ENCODE measurements at regions of chr1 and their contacts with region 1.

Region 1: DNA sequence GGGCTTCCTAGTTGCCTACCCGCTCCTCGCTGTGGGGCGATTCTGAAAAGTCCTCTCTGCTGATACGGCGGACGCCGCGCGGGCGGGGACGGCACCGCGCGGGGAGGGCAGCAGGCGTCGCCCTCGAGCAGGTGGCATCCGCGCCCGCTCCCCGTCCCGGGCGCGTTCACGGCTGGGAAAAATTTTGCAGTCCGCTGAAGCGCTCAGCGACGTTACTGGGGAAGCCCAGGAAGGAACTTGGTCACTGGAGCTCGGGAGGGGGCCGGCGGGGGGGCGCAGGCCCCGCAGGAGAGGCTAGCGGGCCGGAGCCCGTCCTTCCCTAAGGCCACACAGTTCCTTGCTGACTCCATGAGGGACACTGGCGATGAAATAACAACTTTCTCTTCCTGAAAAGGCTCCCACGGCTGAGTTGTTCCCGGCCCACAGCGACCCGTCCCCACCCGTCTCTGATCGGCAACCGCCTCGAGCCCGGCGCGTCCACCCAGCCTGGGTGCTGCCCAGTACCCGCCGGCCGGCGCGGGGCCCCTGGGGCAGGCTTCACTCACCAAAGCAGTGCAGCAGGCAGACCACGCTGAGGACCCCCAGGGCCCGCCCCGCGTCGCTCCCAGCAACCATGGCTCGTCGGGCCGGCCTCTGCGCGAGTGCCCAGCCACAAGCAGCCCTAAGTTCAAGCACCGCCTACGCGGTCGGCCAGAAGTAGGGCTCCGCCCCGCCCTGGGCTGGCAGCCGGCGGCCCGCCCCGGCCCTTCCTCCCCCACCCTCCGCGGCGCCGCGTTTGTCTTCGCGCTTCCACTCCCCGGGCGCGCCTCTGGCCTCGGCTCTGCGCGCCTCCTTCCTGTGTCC is at the start of gene CD58:
- DNase-seq: peak; percentile 92
- CTCF ChIP-seq: peak; percentile 87

Region 2: DNA sequence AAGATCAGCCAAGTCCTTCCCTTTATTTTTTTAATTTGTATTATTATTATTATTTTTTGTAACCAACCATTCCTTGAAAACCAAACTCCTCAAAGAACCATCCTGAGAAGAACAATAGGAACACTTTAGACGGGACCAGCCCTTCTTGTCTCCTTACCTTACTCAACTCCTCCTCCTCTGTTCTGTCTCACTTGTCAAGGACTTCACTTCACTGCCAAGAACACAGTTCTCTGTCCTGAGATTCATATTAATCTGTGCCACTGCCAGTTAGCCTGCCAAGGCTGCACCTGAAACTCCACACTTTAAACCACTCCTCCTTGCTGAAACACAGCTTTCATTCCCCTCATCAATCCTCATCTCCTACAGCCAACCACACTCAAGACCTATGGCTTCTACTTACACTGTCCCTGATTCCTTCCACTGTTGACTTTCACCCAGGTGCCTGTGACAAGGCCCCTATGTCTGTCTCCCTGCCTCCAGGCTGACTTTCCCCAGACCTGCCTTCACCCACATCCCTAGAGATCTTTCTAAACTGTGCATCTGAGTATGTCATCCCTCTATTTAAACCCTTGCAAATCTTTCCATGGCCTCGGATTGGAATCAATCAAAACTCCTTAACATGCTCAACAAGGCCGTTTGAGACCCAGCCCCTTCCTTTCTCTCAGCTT is 271.2 kb before region 1 on chr1:
- in situ Hi-C with region 1: no loop called
- DNase-seq: no peak
- CTCF ChIP-seq: no peak

Region 3: GRCh38 chr1:116679091-116679827 is 108.7 kb after region 1 on chr1:
- in situ Hi-C with region 1: loop called (anchors 10 kb)
- DNase-seq: no peak
- CTCF ChIP-seq: no peak

Region 4: DNA sequence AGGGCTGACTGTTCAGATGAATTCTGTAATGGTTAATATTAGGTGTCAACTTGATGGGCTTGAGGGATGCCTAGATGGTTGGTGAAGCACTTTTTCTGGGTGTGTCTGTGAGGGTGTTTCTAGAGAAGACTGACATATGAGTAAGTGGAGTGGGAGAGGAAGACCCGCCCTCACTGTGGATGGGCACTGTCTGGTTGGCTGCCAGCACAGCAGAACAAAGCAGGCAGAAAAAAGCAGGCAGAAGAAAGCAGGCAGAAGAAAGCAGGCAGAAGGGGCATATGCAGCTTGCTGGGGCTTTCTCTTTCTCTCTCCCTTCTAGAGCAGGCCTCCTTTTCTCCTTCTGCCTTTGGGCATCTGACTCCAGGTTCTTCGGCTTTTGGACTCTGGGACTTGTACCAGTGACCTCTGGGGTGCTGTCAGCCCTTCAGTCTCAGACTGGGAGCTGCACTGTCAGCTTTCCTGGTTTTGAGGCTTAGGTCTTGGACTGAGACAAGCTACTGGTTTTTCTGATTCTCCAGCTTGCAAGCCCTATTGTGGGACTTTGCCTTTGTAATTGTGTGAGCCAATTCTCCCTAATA is 140.8 kb after region 1 on chr1:
- in situ Hi-C with region 1: no loop called
- DNase-seq: no peak
- CTCF ChIP-seq: no peak

Region 5: DNA sequence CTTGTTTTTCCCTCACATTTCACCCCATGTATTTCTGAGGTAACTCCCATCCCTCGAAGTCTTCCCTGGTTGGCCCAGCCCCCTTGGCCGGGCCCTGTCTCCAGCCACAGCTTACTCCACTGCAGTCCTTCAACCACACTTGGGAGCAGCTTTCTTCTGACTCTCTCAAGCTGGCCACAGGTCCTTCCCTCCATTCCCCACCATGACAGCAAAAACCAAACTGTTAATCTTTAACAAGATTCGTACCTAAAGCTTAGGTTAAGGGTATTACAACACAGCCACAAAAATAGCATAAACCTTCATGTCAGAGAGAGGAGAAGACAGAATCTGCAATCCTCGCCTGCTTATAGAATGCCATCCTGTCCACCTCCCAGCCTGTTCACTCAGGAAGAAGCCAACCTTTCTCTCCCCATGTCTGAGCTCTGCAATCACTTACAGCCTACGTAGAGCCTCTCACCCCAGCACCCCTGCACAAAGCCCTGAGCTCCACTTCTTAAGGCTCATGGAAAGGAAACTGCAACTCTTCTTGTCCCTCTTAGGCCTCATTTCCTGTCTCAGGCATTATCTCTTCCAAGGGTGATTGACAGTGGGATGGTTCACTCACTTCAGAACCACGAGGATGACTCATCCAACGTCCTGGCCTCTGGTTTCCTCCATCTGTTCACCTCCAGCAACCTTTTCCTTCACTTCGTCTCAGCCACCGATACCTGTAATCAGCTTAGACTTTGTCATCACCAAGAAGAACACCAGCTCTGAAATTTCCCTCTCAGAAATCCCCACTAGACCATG is 256.4 kb after region 1 on chr1:
- in situ Hi-C with region 1: loop called (anchors 10 kb)
- DNase-seq: peak; percentile 82
- CTCF ChIP-seq: no peak

Measured in GM13976 (cell line).